Tibial artery (tissue), 4 donors: ENCODE measurements at regions of chr1 and their contacts with region 1.

Region 1: GRCh38 chr1:156625436-156626078 is 6.3 kb downstream of the HAPLN2 start:
- DNase-seq: peak; percentile 45 to 77
- H3K4me3 ChIP-seq: peak overlapping the region; percentile 45 to 48
- H3K27ac ChIP-seq: peak overlapping the region; percentile 72 to 74
- H3K4me1 ChIP-seq: peaks cover 0 to 29% (median 21%) of the 10 kb centered on the region in 4 donors
- H3K27me3 ChIP-seq: peaks cover 0 to 58% of the 10 kb centered on the region in 2 donors
- CTCF ChIP-seq: peak; percentile 79 to 84

Region 2: DNA sequence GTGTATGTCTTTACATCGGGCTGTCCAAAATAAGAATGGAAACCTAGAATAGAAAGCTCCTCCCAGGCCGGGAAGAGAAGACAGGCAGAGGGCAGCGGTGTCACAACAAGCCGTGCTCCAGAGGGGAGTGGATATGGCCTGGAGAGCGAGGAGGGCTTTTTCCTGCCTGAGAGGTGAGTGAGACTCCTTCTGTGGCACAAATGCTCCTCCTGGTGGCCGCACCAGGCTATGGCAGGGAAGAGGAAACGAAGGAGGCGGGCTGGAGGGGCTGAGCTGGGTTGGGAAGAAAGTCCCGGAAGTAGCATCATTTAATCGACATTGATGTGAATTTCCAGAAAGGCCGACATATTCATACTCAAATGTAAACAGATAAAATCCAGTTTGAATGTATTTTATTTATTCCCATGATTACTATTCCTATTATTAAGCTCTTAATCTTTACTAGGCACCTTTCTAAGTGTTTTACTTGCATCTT is 179.7 kb before region 1 on chr1:
- intact Hi-C with region 1: loop called (anchors 5 kb)
- DNase-seq: peak; percentile 79 to 85
- H3K4me3 ChIP-seq: no peak overlapping the region
- H3K27ac ChIP-seq: no peak overlapping the region
- H3K4me1 ChIP-seq: peaks cover 0 to 7% (median 3%) of the 10 kb centered on the region in 4 donors
- H3K27me3 ChIP-seq: peaks cover 3 to 52% of the 10 kb centered on the region in 2 donors
- CTCF ChIP-seq: peak; percentile 90 to 93

Region 3: DNA sequence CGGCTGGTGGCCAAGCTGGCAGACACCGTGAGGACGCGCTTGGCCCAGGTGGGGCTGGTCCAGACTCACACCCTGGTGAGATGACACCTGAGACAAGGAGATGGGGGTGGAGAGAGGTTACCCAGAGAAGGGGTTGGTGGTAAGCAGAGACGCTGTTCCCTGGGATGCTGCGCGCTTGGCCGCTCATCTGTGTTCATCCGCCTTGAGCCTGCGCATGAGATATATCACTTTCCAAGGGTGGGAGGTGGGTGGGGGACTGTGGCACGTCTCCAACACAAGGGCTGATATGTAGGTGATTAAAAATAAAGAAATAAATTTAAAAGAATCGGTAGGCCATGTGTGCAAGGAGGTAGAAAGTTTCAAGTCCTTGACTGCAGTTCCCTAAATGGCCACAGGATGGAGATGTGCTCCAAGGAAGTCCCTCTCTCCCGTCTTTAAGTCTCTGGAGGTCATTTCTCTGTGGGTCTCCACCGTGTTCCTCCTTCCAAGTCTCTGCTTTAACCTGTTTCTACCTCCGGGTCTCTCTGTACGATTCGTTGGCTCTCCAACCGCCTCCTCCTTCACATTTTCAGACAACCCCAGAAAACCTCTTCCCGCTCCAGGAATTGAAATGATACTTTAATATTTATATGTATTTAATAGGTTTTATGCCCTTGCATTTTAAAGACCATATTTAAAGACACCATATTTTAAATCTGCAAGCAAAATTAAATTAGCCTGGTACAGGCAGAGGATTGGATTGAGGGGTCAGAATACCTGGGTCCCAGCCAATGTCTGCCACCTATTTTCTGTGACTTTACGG is 41.5 kb before region 1 on chr1:
- intact Hi-C with region 1: no loop called
- DNase-seq: peak; percentile 76 to 79
- H3K4me3 ChIP-seq: no peak overlapping the region
- H3K27ac ChIP-seq: no peak overlapping the region
- H3K4me1 ChIP-seq: no peaks in the 10 kb centered on the region
- H3K27me3 ChIP-seq: peaks cover 0 to 2% of the 10 kb centered on the region in 2 donors
- CTCF ChIP-seq: peak; percentile 86 to 89

Region 4: GRCh38 chr1:156659994-156660751 is 34.6 kb after region 1 on chr1:
- intact Hi-C with region 1: loop called (anchors 2 kb)
- DNase-seq: peak; percentile 94 to 99
- H3K4me3 ChIP-seq: peak overlapping the region in 1 of 2 donors; percentile 14
- H3K27ac ChIP-seq: peak overlapping the region; percentile 73 to 77
- H3K4me1 ChIP-seq: peaks cover 0 to 84% (median 73%) of the 10 kb centered on the region in 4 donors
- H3K27me3 ChIP-seq: peaks cover 0 to 16% of the 10 kb centered on the region in 2 donors
- CTCF ChIP-seq: peak; percentile 99

Region 5: GRCh38 chr1:156673387-156674121 is 48.0 kb after region 1 on chr1:
- intact Hi-C with region 1: loop called (anchors 5 kb)
- DNase-seq: no peak
- H3K4me3 ChIP-seq: no peak overlapping the region
- H3K27ac ChIP-seq: no peak overlapping the region
- H3K4me1 ChIP-seq: peaks cover 0 to 54% (median 31%) of the 10 kb centered on the region in 4 donors
- H3K27me3 ChIP-seq: peaks cover 0 to 15% of the 10 kb centered on the region in 2 donors
- CTCF ChIP-seq: no peak

Region 6: DNA sequence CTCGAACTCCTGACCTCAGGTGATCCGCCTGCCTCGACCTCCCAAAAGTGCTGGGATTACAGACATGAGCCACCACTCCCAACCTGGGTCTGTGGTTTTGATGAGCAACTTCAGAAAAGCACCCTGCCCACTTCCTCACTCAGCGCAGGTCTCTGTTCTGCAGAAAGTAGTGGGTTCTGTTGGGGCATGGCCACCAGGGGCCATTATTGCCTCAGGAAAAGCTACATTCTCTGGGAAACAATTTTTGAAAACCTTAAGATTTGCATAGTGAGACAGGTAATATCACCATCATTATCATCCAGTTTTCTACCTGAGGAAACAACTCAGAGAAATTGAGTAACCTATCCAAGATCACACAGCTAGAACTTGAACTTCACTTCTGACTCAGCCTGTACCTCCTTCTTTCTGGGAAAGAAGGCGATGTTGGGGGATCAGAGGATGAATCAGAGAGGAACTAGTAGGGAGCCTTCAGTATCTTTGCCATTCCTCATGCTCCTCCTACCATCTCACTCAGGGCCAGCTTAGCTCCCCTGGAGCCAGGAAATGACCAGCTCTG is 58.7 kb after region 1 on chr1:
- intact Hi-C with region 1: loop called (anchors 2 kb)
- DNase-seq: no peak
- H3K4me3 ChIP-seq: no peak overlapping the region
- H3K27ac ChIP-seq: no peak overlapping the region
- H3K4me1 ChIP-seq: peaks cover 0 to 7% (median 4%) of the 10 kb centered on the region in 4 donors
- H3K27me3 ChIP-seq: peaks cover 0 to 69% of the 10 kb centered on the region in 2 donors
- CTCF ChIP-seq: no peak